ENCODE measurements at regions of chr6 and their contacts with region 1.

Region 1: DNA sequence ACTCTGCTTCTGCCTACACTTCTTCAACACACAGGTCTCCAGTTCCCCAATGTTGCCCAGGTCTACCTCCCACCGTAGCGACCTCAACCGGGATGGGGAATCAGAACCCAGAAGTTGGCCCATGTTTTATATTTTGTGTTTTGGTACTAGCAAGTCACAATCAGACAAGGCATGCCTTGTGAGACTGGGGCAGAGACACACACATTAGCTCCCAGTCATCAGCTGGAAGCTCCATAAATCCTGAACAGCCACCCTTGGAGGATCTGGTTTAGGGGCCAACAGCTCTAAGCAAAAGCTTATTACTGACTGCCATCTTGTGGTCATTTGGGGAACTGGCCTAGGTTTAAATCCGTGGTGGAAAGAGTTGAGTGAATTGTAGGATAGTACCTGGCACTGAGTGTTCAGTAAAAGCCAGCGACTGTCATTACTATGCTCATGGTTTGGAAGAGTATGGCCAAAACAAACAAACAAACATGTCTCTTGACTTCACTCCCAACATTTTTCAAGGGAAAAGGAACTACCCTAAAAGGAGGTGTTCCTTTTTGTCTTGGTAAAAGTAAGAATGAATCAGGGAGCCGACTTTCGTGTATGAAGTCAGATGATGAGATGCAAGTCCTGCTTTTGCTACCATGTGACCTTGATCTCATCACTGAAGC is 40.5 kb downstream of the PIM1 start:
- DNase-seq: peak in 1 of 2 donors; percentile 89
- H3K4me3 ChIP-seq: no peak overlapping the region
- H3K27ac ChIP-seq: no peak overlapping the region
- H3K4me1 ChIP-seq: no peaks in the 10 kb centered on the region
- H3K27me3 ChIP-seq: no peaks in the 10 kb centered on the region
- CTCF ChIP-seq: peak; percentile 91 to 98 (median 96)

Region 2: DNA sequence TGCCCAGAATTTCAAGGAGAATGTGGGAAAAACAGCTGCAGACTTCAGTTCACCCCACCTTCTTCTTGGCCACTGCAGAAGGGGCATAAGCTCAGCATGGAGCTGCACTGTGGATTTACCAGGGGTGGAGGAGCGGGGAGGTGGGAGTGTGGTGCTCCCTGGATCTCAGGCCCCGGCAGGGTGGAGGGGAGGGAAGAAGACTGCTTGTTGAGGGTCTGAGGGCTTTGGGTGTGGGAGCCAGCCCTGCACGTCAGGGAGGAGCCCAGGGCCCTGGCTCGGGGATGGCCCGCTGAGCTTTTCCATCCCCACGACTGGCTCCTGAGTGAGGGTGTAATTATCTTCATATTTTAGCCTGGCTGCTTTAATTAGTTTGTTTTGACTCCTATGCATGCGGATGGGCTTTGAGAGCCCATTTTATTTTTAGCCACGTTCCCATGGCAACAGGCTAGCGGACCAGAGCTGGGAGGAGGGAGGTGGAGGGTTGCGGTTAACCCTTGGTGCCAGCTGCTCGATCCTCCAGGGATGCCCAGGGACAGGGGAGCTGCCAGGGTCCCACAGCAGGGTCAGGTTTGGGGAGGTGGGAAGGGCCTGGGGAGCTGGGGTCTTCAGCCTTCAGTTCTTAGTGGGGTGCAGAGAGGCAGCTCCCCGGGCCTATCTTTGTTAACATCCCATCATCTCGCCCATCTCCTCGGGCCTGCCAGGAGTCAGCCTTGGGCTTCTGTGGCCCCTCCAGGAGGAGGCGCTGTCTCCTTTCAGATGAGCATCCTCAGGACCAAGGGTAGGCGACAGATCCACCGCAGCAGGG is 444.6 kb before region 1 on chr6:
- intact Hi-C with region 1: loop called (anchors 5 kb)
- DNase-seq: peak; percentile 33 to 89
- H3K4me3 ChIP-seq: no peak overlapping the region
- H3K27ac ChIP-seq: no peak overlapping the region
- H3K4me1 ChIP-seq: peaks cover 0 to 8% of the 10 kb centered on the region in 2 donors
- H3K27me3 ChIP-seq: no peaks in the 10 kb centered on the region
- CTCF ChIP-seq: peak; percentile 63 to 85 (median 82)

Region 3: GRCh38 chr6:36885461-36886401 is 324.7 kb before region 1 on chr6 and contains the start of gene C6orf89:
- intact Hi-C with region 1: loop called (anchors 1 kb)
- DNase-seq: peak; percentile 93 to 99
- H3K4me3 ChIP-seq: peak within 1 kb of the TSS; percentile 85 to 90
- H3K27ac ChIP-seq: peak within 1 kb of the TSS; percentile 89 to 91
- H3K4me1 ChIP-seq: peaks cover 0 to 14% of the 10 kb centered on the region in 2 donors
- H3K27me3 ChIP-seq: no peaks in the 10 kb centered on the region
- CTCF ChIP-seq: peak; percentile 76 to 93 (median 84)
- total RNA-seq, gene C6orf89: 21.6 TPM

Region 4: DNA sequence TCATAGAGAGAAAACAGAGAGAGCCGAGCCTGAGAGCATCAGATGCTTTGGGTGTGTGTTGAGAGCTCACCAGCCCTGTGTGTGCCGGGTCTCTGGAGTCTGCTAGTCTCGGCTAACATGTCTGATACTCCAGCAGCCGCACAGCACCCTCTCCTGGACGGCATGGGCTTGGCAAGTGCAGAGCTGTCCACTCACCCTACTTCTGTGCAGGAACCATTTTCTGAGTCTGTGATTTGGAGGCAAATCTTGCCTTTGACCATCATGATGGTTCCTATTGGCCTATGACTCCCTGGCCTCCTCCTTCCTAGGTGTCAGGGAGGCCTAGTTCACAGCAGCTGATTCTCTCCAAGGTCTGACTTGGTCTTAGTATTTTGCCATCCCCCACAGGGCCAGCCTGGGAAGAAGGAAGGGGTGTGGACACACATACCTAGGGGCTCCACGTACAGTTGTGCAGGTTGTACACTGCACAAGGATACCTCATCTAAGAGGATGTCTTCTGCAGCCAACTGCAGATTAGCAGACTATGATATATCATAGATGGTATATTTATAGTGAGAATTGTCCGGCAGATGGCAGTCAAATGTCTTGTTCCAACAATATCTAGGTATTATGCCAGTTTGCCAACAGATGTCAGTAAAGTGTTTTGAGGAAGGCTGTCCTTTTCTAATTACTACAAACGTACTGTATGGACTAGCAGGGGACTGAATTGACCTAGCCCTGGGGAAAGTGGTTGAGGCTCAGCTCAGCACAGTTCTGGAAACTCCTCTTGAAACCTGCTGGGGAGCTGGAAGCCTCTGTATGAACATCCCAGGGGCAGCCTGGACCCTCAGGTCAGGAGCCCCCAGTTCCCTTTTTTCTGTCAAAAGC is 192.0 kb before region 1 on chr6:
- intact Hi-C with region 1: loop called (anchors 1 kb)
- DNase-seq: peak; percentile 64 to 95
- H3K4me3 ChIP-seq: no peak overlapping the region
- H3K27ac ChIP-seq: peak overlapping the region; percentile 32 to 63
- H3K4me1 ChIP-seq: peaks cover 0 to 2% of the 10 kb centered on the region in 2 donors
- H3K27me3 ChIP-seq: no peaks in the 10 kb centered on the region
- CTCF ChIP-seq: peak; percentile 83 to 91 (median 86)

Region 5: DNA sequence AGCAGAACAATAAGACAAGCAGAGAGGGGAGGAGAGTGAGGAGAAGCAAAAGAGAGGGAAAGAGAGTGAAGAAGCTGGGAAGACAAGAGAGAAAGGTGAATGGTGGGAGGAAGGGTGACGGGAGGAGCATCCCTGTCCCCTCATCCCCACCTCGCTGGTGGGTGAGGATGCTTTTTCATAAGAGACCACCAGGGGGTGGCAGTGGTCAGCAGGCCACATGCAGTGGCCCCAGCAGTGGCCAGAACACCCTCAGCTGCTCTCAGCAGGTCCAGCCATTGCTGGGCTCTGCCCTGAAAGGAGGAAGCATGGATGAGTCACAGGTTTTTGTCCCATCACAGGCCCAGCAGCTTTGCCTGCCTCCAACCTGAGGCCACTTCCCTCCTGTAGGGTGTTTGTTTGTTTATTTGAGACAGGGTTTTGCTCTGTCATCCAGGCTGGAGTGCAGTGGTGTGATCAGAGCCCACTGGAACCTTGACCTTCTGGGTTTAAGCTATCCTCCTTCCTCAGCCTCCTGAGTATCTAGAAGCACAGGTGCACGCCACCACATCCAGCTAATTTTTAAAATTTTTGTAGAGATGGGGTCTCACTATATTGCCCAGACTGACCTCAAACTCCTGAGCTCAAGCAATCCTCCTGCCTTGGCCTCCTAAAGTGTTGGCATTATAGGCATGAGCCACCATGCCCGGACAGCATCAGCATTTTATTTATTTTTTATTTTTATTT is 181.0 kb before region 1 on chr6:
- intact Hi-C with region 1: loop called (anchors 1 kb)
- DNase-seq: peak; percentile 62 to 83
- H3K4me3 ChIP-seq: no peak overlapping the region
- H3K27ac ChIP-seq: no peak overlapping the region
- H3K4me1 ChIP-seq: no peaks in the 10 kb centered on the region
- H3K27me3 ChIP-seq: no peaks in the 10 kb centered on the region
- CTCF ChIP-seq: peak; percentile 41 to 62 (median 61)

Region 6: DNA sequence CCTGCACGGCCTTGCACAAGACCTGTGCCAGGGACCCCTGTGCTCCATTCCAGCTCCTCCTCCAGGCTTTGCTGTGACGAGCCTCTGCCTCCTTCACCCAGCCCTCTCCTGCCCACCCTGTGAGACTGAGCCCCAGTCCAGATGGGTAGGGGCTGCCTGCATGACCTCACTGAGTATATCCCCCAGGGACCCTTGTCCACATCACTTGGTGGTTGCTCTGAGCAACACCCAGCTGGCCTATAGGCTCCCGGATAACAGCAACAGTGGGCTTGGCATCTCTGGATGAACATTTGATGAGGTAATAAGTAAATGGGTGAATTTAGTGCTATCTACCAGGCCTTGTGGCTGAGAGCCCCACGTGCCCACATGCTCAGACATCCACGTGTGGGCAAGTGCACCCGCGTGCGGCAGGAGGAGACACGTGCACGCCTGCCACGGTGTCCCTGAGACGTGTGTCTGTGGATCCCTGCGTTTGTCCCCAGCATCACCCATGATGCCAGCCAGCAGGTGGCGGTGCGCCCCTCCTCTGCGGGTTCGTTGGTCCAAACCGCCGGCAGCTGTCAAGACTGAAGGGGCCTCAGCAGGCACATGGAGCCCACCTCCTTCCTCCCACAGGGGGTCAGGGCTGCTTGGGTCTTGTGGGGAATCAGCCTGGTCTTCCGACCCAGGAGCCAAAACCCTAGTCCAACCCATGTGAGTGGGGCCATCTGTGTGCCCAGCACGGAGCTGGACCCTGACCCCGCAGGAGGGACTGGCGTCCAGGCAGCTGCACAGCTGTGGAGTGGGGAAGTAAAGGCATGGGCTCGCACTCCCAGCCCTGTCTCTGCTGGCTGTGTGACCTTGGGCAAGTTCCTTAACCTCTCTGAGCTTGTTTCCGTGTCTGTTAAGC is 159.1 kb before region 1 on chr6:
- intact Hi-C with region 1: loop called (anchors 1 kb)
- DNase-seq: peak; percentile 63 to 92
- H3K4me3 ChIP-seq: no peak overlapping the region
- H3K27ac ChIP-seq: no peak overlapping the region
- H3K4me1 ChIP-seq: peaks cover 0 to 6% of the 10 kb centered on the region in 2 donors
- H3K27me3 ChIP-seq: no peaks in the 10 kb centered on the region
- CTCF ChIP-seq: peak; percentile 88 to 92 (median 92)

Region 7: GRCh38 chr6:37127961-37128862 is 82.2 kb before region 1 on chr6:
- intact Hi-C with region 1: loop called (anchors 1 kb)
- DNase-seq: no peak
- H3K4me3 ChIP-seq: no peak overlapping the region
- H3K27ac ChIP-seq: no peak overlapping the region
- H3K4me1 ChIP-seq: peaks cover 0 to 3% of the 10 kb centered on the region in 2 donors
- H3K27me3 ChIP-seq: no peaks in the 10 kb centered on the region
- CTCF ChIP-seq: peak in 1 of 3 experiments; percentile 55

Region 8: DNA sequence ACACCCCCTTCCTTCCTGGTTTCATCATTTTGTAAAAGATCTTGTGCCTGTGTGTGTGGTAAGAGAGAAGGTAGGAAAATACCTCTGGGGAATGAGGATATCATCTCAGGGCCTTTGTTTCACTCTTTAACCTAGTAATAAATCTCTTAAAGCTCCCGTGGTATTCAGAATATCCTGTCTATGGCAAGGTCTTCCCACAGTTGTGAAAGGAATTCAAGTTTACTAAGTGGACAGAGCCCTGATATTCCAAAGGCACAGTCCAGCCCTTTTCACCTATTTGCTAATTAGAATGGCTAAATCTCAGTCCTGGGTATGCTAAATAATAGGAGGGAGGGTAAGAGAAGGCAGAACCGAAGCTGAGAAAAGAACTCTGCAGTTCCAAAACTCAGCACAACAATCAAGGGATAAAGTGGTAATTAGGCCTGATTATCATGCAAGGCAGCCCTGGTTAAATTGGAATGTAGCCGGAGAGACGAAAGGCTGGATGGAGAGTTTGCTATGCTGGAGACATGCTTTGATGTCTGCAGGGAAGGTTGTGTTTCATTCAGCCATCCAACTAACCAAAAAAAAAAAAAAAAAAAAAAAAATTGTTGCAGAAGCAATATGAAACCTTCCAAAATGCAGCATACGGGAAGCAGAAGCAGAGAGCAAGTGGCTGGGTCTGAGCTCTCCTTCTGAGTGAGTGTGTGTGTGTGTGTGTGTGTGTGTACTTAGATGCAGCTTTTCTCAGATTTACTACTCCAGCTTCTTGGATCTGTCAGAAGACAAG is 69.0 kb before region 1 on chr6:
- intact Hi-C with region 1: no loop called
- DNase-seq: no peak
- H3K4me3 ChIP-seq: no peak overlapping the region
- H3K27ac ChIP-seq: no peak overlapping the region
- H3K4me1 ChIP-seq: peaks cover 9 to 34% of the 10 kb centered on the region in 2 donors
- H3K27me3 ChIP-seq: no peaks in the 10 kb centered on the region
- CTCF ChIP-seq: no peak

Region 9: GRCh38 chr6:37259191-37259590 is 48.8 kb after region 1 on chr6:
- intact Hi-C with region 1: no loop called
- DNase-seq: no peak
- H3K4me3 ChIP-seq: peak overlapping the region in 1 of 2 donors; percentile 89
- H3K27ac ChIP-seq: peak overlapping the region in 1 of 2 donors; percentile 2
- H3K4me1 ChIP-seq: peaks cover 7 to 10% of the 10 kb centered on the region in 2 donors
- H3K27me3 ChIP-seq: no peaks in the 10 kb centered on the region
- CTCF ChIP-seq: no peak